ENCODE measurements at regions of chr7 and their contacts with region 1.

Region 1: GRCh38 chr7:32942786-32943653 is 14.2 kb upstream of the FKBP9 start:
- DNase-seq: peak; percentile 87 to 90 (median 88)
- ATAC-seq: peak; percentile 93
- H3K4me3 ChIP-seq: peak overlapping the region; percentile 84
- H3K27ac ChIP-seq: peak overlapping the region; percentile 90
- H3K4me1 ChIP-seq: peaks cover 2 to 11% of the 10 kb centered on the region in 2 experiments; a peak in 3 of 5 replicates
- H3K27me3 ChIP-seq: no peaks in the 10 kb centered on the region
- CTCF ChIP-seq: peak; percentile 63 to 95 (median 80)
- EP300 ChIP-seq: no peak
- POLR2A ChIP-seq: no peak
- RAD21 ChIP-seq: peak; percentile 88 to 89

Region 2: DNA sequence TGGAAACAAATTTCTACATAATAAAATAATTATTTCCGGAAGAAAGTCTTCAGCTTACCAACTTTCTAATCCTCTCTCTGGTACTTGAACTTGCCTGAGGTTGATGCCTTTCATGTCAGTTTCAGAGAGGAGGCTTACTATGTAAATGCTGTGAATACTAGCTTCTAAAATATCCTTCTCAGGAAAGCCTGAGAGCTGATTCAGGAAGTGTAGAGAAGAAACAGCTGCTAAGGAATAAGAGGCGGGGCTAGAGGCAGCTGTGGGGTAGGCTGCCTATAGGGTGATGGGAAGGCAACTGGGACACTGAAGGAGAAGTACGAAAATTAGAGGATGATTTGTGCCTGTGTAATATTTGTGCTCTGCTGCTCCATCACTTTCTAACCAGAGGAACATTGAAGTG is 378.5 kb before region 1 on chr7:
- CTCF ChIA-PET with region 1: no interaction called
- POLR2A ChIA-PET with region 1: no interaction called
- in situ Hi-C with region 1: no loop called
- intact Hi-C with region 1: no loop called
- DNase-seq: no peak
- ATAC-seq: no peak
- H3K4me3 ChIP-seq: no peak overlapping the region
- H3K27ac ChIP-seq: no peak overlapping the region
- H3K4me1 ChIP-seq: no peaks in the 10 kb centered on the region
- H3K27me3 ChIP-seq: no peaks in the 10 kb centered on the region
- CTCF ChIP-seq: no peak
- EP300 ChIP-seq: no peak
- POLR2A ChIP-seq: no peak
- RAD21 ChIP-seq: no peak

Region 3: DNA sequence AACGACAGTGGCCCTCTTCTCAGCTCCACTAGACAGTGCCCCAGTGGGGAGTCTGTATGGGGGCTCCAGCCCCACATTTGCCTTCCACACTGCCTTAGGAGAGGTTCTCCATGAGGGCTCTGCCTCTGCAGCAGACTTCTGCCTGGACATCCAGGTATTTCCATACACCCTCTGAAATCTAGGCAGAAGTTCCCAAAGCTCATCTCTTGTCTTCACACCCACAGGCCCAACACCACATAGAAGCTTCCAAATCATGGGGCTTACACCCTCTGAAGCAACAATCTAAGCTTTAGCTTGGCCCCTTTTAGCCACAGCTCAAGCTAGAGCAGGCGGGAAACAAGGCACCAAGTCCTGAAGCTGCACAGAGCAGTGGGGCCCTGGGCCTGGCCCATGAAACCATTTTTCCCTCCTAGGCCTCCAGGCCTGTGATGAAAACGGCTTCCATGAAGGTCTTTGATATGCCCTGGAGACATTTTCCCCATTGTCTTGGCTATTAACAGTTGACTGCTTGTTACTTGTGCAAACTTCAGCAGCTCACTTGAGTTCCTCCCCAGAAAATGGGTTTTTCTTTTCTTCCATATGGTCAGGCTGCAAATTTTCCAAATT is 140.6 kb before region 1 on chr7:
- CTCF ChIA-PET with region 1: no interaction called
- POLR2A ChIA-PET with region 1: no interaction called
- in situ Hi-C with region 1: no loop called
- intact Hi-C with region 1: loop called (anchors 2 kb)
- DNase-seq: no peak
- ATAC-seq: no peak
- H3K4me3 ChIP-seq: no peak overlapping the region
- H3K27ac ChIP-seq: no peak overlapping the region
- H3K4me1 ChIP-seq: no peaks in the 10 kb centered on the region
- H3K27me3 ChIP-seq: no peaks in the 10 kb centered on the region
- CTCF ChIP-seq: no peak
- EP300 ChIP-seq: no peak
- POLR2A ChIP-seq: no peak
- RAD21 ChIP-seq: no peak

Region 4: GRCh38 chr7:32891800-32892520 is 51.1 kb before region 1 on chr7:
- CTCF ChIA-PET with region 1: interaction called, 3 read pairs
- POLR2A ChIA-PET with region 1: no interaction called
- in situ Hi-C with region 1: no loop called
- intact Hi-C with region 1: loop called (anchors 2 kb)
- DNase-seq: peak; percentile 88 to 98 (median 90)
- ATAC-seq: peak; percentile 50
- H3K4me3 ChIP-seq: peak overlapping the region; percentile 84
- H3K27ac ChIP-seq: peak overlapping the region; percentile 99
- H3K4me1 ChIP-seq: peaks cover 21 to 35% of the 10 kb centered on the region in 2 experiments
- H3K27me3 ChIP-seq: no peaks in the 10 kb centered on the region
- CTCF ChIP-seq: no peak
- EP300 ChIP-seq: peak; percentile 4; the same call in 1 of the 2 replicates
- POLR2A ChIP-seq: peak; percentile 83
- RAD21 ChIP-seq: no peak

Region 5: GRCh38 chr7:32957326-32958045 is 14.5 kb after region 1 on chr7 and contains the start of gene FKBP9:
- CTCF ChIA-PET with region 1: no interaction called
- POLR2A ChIA-PET with region 1: interaction called, 21 read pairs
- in situ Hi-C with region 1: no loop called
- intact Hi-C with region 1: no loop called
- DNase-seq: peak; percentile 86 to 95 (median 94)
- ATAC-seq: peak; percentile 95
- H3K4me3 ChIP-seq: peak within 1 kb of the TSS; percentile 90
- H3K27ac ChIP-seq: peak within 1 kb of the TSS; percentile 70
- H3K4me1 ChIP-seq: peaks cover 4 to 22% of the 10 kb centered on the region in 2 experiments; a peak in 4 of 5 replicates
- H3K27me3 ChIP-seq: no peaks in the 10 kb centered on the region
- CTCF ChIP-seq: no peak
- EP300 ChIP-seq: no peak
- POLR2A ChIP-seq: peak; percentile 70
- RAD21 ChIP-seq: no peak
- polyA plus RNA-seq, gene FKBP9: 5.9 to 8.1 TPM

Measured in K562 (cell line).